H1 (cell line): ENCODE measurements at regions of chr11 and their contacts with region 1.

Region 1: GRCh38 chr11:15770798-15771414 is 585.4 kb downstream of the SOX6 start:
- DNase-seq: peak; percentile 13 to 84
- H3K4me3 ChIP-seq: no peak overlapping the region
- H3K27ac ChIP-seq: no peak overlapping the region
- H3K4me1 ChIP-seq: no peaks in the 10 kb centered on the region
- H3K27me3 ChIP-seq: no peaks in the 10 kb centered on the region
- CTCF ChIP-seq: peak; percentile 69 to 85 (median 71)
- EP300 ChIP-seq: no peak
- POLR2A ChIP-seq: no peak
- RAD21 ChIP-seq: peak; percentile 59 to 72

Region 2: GRCh38 chr11:15159085-15159484 is 611.8 kb before region 1 on chr11:
- CTCF ChIA-PET with region 1: no interaction called
- POLR2A ChIA-PET with region 1: no interaction called
- DNase-seq: no peak
- H3K4me3 ChIP-seq: no peak overlapping the region
- H3K27ac ChIP-seq: no peak overlapping the region
- H3K4me1 ChIP-seq: no peaks in the 10 kb centered on the region
- H3K27me3 ChIP-seq: no peaks in the 10 kb centered on the region
- CTCF ChIP-seq: peak; percentile 15 to 73 (median 69)
- EP300 ChIP-seq: no peak
- POLR2A ChIP-seq: no peak
- RAD21 ChIP-seq: peak; percentile 78 to 80

Region 3: GRCh38 chr11:15783611-15784010 is 12.7 kb after region 1 on chr11:
- CTCF ChIA-PET with region 1: interaction called, 33 read pairs
- POLR2A ChIA-PET with region 1: no interaction called
- DNase-seq: no peak
- H3K4me3 ChIP-seq: no peak overlapping the region
- H3K27ac ChIP-seq: no peak overlapping the region
- H3K4me1 ChIP-seq: peaks cover 0 to 4% (median 0%) of the 10 kb centered on the region in 4 experiments; a peak in 2 of 7 replicates
- H3K27me3 ChIP-seq: no peaks in the 10 kb centered on the region
- CTCF ChIP-seq: no peak
- EP300 ChIP-seq: no peak
- POLR2A ChIP-seq: no peak
- RAD21 ChIP-seq: no peak

Region 4: DNA sequence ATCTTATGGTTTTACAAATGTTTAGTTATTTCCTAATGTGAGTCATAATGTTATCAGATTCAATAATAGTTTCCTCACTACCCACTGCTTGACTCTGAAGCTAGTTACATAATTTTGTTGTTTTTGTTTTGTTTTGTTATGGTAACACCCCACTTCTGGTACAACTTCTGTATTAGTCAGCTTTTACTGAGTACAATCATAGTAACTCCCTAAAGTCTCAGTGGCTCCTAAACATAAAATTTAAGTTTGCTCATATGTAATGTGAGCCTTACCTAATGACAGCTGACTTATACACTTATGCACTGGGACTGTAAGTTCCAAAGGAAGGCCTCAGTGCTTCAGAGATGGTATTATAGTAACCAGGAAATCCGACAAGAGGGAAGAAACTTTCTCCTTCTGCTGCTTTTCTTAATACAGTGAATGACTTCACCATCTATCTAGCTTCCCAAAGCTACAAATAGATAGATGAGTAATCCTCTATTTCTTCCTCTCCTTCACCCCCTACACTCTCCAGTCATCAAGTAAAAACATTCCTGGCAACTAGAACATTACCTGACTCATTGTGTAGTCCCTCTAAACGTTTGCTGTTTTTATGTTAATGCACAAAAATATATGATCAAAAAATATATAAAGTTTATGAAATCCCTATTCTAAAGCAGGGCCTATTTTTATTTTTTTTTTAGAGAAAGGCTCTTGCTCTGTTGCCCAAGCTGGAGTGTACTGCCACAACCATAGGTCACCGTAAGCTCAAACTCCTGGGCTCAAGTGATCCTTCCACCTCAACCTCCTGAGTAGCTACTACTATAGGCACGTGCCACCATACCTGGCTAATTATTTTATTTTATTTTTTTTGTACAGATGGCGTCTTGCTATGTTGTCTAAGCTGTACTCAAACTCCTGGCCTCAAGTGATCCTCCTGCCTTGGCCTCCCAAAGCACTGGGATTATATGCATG is 22.4 kb after region 1 on chr11:
- CTCF ChIA-PET with region 1: interaction called, 14 read pairs
- POLR2A ChIA-PET with region 1: no interaction called
- DNase-seq: no peak
- H3K4me3 ChIP-seq: no peak overlapping the region
- H3K27ac ChIP-seq: no peak overlapping the region
- H3K4me1 ChIP-seq: no peaks in the 10 kb centered on the region
- H3K27me3 ChIP-seq: peaks cover 0 to 1% (median 0%) of the 10 kb centered on the region in 4 experiments; a peak in 1 of 7 replicates
- CTCF ChIP-seq: no peak
- EP300 ChIP-seq: no peak
- POLR2A ChIP-seq: no peak
- RAD21 ChIP-seq: no peak